IMR-90 (cell line): ENCODE measurements at regions of chr7 and their contacts with region 1.

Region 1: GRCh38 chr7:5793361-5794072 is 12.1 kb upstream of the RNF216 start:
- DNase-seq: no peak
- ATAC-seq: no peak
- H3K4me3 ChIP-seq: no peak overlapping the region
- H3K27ac ChIP-seq: no peak overlapping the region
- H3K4me1 ChIP-seq: no peaks in the 10 kb centered on the region
- H3K27me3 ChIP-seq: no peaks in the 10 kb centered on the region; the same call in 1 of the 2 replicates
- CTCF ChIP-seq: no peak
- POLR2A ChIP-seq: no peak
- RAD21 ChIP-seq: no peak

Region 2: GRCh38 chr7:5677538-5678294 is 115.8 kb before region 1 on chr7:
- CTCF ChIA-PET with region 1: no interaction called
- POLR2A ChIA-PET with region 1: no interaction called
- dilution Hi-C with region 1: no loop called
- in situ Hi-C with region 1: no loop called
- intact Hi-C with region 1: no loop called
- DNase-seq: peak; percentile 78
- ATAC-seq: peak; percentile 92
- H3K4me3 ChIP-seq: no peak overlapping the region
- H3K27ac ChIP-seq: peak overlapping the region; percentile 28; the same call in 1 of the 2 replicates
- H3K4me1 ChIP-seq: peaks cover 23% of the 10 kb centered on the region
- H3K27me3 ChIP-seq: no peaks in the 10 kb centered on the region
- CTCF ChIP-seq: peak; percentile 86
- POLR2A ChIP-seq: no peak
- RAD21 ChIP-seq: peak; percentile 78

Region 3: DNA sequence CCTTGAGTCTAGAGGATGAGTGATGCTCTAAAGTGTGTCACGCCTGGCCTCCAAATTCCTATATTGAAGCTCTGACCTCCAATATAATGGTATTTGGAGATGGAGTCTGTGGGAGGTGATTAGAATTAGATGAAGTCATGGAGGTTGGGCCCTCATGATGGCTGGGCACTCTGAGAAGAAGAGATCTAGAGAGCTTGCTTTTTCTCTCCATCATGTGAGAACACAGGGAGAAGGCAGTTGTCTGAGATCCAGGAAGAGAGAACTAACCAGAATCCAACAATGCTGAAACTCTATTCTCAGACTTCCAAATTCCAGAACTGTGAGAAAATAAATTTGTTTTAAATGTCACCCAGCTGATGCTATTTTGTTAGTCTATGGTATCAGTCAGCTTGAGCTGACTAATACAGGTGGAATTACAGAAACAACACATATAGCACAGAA is 27.2 kb before region 1 on chr7:
- CTCF ChIA-PET with region 1: no interaction called
- POLR2A ChIA-PET with region 1: no interaction called
- dilution Hi-C with region 1: no loop called
- in situ Hi-C with region 1: no loop called
- intact Hi-C with region 1: loop called (anchors 1 kb)
- DNase-seq: peak; percentile 81
- ATAC-seq: peak; percentile 70
- H3K4me3 ChIP-seq: no peak overlapping the region
- H3K27ac ChIP-seq: peak overlapping the region; percentile 79
- H3K4me1 ChIP-seq: peaks cover 21% of the 10 kb centered on the region
- H3K27me3 ChIP-seq: no peaks in the 10 kb centered on the region
- CTCF ChIP-seq: no peak
- POLR2A ChIP-seq: no peak
- RAD21 ChIP-seq: no peak